Activated CD4-positive, alpha-beta T cell treated with anti-CD3 and anti-CD28 coated beads for 36 hours (primary cell): ENCODE measurements at regions of chr12 and their contacts with region 1.

Region 1: GRCh38 chr12:8949342-8950220 is at the start of gene M6PR:
- DNase-seq: peak; percentile 96
- ATAC-seq: peak; percentile 85
- H3K4me3 Mint-ChIP-seq: peak within 1 kb of the TSS; percentile 89
- H3K27ac Mint-ChIP-seq: peak within 1 kb of the TSS; percentile 97
- H3K4me1 Mint-ChIP-seq: peaks cover 57% of the 10 kb centered on the region
- H3K27me3 Mint-ChIP-seq: no peaks in the 10 kb centered on the region
- total RNA-seq, gene M6PR: 146 to 179 TPM

Region 2: GRCh38 chr12:8867009-8867408 is 82.6 kb before region 1 on chr12:
- CTCF ChIA-PET with region 1: no interaction called
- POLR2A ChIA-PET with region 1: no interaction called
- intact Hi-C with region 1: no loop called
- DNase-seq: no peak
- ATAC-seq: no peak
- H3K4me3 Mint-ChIP-seq: no peak overlapping the region
- H3K27ac Mint-ChIP-seq: no peak overlapping the region
- H3K4me1 Mint-ChIP-seq: no peaks in the 10 kb centered on the region
- H3K27me3 Mint-ChIP-seq: no peaks in the 10 kb centered on the region

Region 3: GRCh38 chr12:8914716-8915526 is 34.7 kb before region 1 on chr12:
- CTCF ChIA-PET with region 1: interaction called, 11 read pairs
- POLR2A ChIA-PET with region 1: no interaction called
- intact Hi-C with region 1: loop called (anchors 1 kb)
- DNase-seq: peak; percentile 69
- ATAC-seq: peak; percentile 82
- H3K4me3 Mint-ChIP-seq: no peak overlapping the region
- H3K27ac Mint-ChIP-seq: no peak overlapping the region
- H3K4me1 Mint-ChIP-seq: peaks cover 12% of the 10 kb centered on the region
- H3K27me3 Mint-ChIP-seq: no peaks in the 10 kb centered on the region

Region 4: GRCh38 chr12:8989413-8989812 is 39.8 kb after region 1 on chr12 and contains the start of gene KLRG1:
- CTCF ChIA-PET with region 1: no interaction called
- POLR2A ChIA-PET with region 1: interaction called, 3 read pairs
- intact Hi-C with region 1: loop called in 1 of 2 experiments (anchors 2 kb)
- DNase-seq: peak; percentile 20
- ATAC-seq: peak; percentile 66
- H3K4me3 Mint-ChIP-seq: no peak within 1 kb of the TSS
- H3K27ac Mint-ChIP-seq: peak within 1 kb of the TSS; percentile 0
- H3K4me1 Mint-ChIP-seq: peaks cover 58% of the 10 kb centered on the region
- H3K27me3 Mint-ChIP-seq: no peaks in the 10 kb centered on the region
- total RNA-seq, gene KLRG1: 2.3 to 2.7 TPM

Region 5: GRCh38 chr12:9027161-9028059 is 77.8 kb after region 1 on chr12:
- CTCF ChIA-PET with region 1: interaction called, 7 read pairs
- POLR2A ChIA-PET with region 1: interaction called, 4 read pairs
- intact Hi-C with region 1: loop called (anchors 1 kb)
- DNase-seq: peak; percentile 63
- ATAC-seq: no peak
- H3K4me3 Mint-ChIP-seq: peak overlapping the region; percentile 36
- H3K27ac Mint-ChIP-seq: peak overlapping the region; percentile 79
- H3K4me1 Mint-ChIP-seq: peaks cover 52% of the 10 kb centered on the region
- H3K27me3 Mint-ChIP-seq: no peaks in the 10 kb centered on the region

Region 6: GRCh38 chr12:9673404-9674225 is 724.0 kb after region 1 on chr12:
- CTCF ChIA-PET with region 1: no interaction called
- POLR2A ChIA-PET with region 1: no interaction called
- intact Hi-C with region 1: loop called in 1 of 2 experiments (anchors 5 kb)
- DNase-seq: peak; percentile 89
- ATAC-seq: peak; percentile 47
- H3K4me3 Mint-ChIP-seq: peak overlapping the region; percentile 93
- H3K27ac Mint-ChIP-seq: peak overlapping the region; percentile 99
- H3K4me1 Mint-ChIP-seq: peaks cover 47% of the 10 kb centered on the region
- H3K27me3 Mint-ChIP-seq: no peaks in the 10 kb centered on the region